ENCODE measurements at regions of chr22 and their contacts with region 1.

Region 1: GRCh38 chr22:30088468-30088867 is 8.2 kb downstream of the HORMAD2 start:
- DNase-seq: no peak
- H3K27ac ChIP-seq: no peak overlapping the region
- CTCF ChIP-seq: no peak

Region 2: GRCh38 chr22:29635734-29636357 is 452.6 kb before region 1 on chr22:
- CTCF ChIA-PET with region 1: interaction called, 10 read pairs
- POLR2A ChIA-PET with region 1: no interaction called
- DNase-seq: peak; percentile 30
- H3K27ac ChIP-seq: no peak overlapping the region
- CTCF ChIP-seq: peak; percentile 84

Region 3: DNA sequence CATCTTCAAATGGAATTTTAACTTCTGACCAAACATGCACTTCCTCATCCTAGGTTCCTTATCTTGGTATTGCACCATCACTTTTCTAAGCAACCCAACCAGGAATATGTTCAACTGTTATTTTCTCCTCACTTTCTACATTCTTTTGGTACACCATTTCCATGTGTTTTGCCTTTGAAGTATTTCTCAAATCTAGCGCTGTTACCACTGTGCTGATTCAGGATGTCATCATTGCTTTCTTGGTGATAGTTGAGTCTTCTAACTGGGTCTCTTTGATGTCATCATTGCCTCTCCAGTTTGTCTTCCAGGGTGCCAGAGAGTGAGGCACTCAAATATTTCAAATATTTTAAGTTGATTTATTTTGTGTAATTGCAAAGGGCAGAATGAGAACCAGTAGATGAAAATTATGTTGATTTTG is 39.3 kb after region 1 on chr22:
- CTCF ChIA-PET with region 1: no interaction called
- POLR2A ChIA-PET with region 1: no interaction called
- DNase-seq: no peak
- H3K27ac ChIP-seq: no peak overlapping the region
- CTCF ChIP-seq: no peak

Measured in RWPE1 (cell line).